BJ (cell line): ENCODE measurements at regions of chr5 and their contacts with region 1.

Region 1: GRCh38 chr5:115586601-115587048 is 15.7 kb downstream of the TICAM2 start:
- DNase-seq: no peak
- H3K4me3 ChIP-seq: no peak overlapping the region
- H3K27me3 ChIP-seq: no peaks in the 10 kb centered on the region
- CTCF ChIP-seq: peak; percentile 36

Region 2: GRCh38 chr5:115309751-115310370 is 276.8 kb before region 1 on chr5:
- CTCF ChIA-PET with region 1: interaction called, 22 read pairs
- POLR2A ChIA-PET with region 1: no interaction called
- DNase-seq: no peak
- H3K4me3 ChIP-seq: no peak overlapping the region
- H3K27me3 ChIP-seq: no peaks in the 10 kb centered on the region
- CTCF ChIP-seq: peak; percentile 50

Region 3: GRCh38 chr5:115377468-115378217 is 209.0 kb before region 1 on chr5:
- CTCF ChIA-PET with region 1: interaction called, 10 read pairs
- POLR2A ChIA-PET with region 1: no interaction called
- DNase-seq: peak; percentile 93
- H3K4me3 ChIP-seq: no peak overlapping the region
- H3K27me3 ChIP-seq: no peaks in the 10 kb centered on the region
- CTCF ChIP-seq: peak; percentile 49

Region 4: GRCh38 chr5:115601701-115602590 is 15.3 kb after region 1 on chr5 and contains the start of gene TICAM2:
- CTCF ChIA-PET with region 1: interaction called, 14 read pairs
- POLR2A ChIA-PET with region 1: interaction called, 3 read pairs
- DNase-seq: no peak
- H3K4me3 ChIP-seq: peak within 1 kb of the TSS; percentile 82
- H3K27me3 ChIP-seq: no peaks in the 10 kb centered on the region
- CTCF ChIP-seq: 0 out of 2 replicates have a peak, but pooled peaks have one; percentile 2
- polyA plus RNA-seq, gene TICAM2: 1.2 and 1.4 TPM in 2 replicates

Region 5: DNA sequence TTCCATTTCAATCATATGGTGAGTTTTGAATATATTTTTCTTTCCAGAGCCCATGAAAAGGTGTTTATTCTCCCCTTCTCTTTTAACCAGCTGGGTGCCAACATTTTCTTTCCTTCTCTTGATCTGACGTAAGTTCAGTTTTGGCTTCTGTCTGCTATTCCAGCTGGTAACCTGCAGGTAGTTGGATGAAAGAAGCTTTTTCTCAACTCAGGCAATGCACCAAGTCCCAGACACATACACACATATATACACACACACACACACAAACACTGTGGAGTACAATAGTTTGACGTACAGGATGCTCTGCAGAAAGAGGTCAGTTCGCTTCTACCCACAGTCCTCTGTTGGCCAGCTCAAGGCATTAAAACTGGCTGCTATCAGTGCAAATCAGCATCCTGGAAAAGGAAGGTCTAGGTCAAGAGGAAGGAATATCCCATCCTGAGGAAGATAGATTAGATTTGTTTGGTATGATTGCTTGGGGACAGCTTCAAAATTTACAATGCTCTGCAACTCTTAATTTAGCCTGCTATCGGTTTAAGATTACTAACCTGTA is 1202.3 kb after region 1 on chr5:
- CTCF ChIA-PET with region 1: no interaction called
- POLR2A ChIA-PET with region 1: no interaction called
- DNase-seq: no peak
- H3K4me3 ChIP-seq: no peak overlapping the region
- H3K27me3 ChIP-seq: no peaks in the 10 kb centered on the region
- CTCF ChIP-seq: no peak